ENCODE measurements at regions of chr5 and their contacts with region 1.

Region 1: GRCh38 chr5:167969998-167970397 is 321.4 kb upstream of the WWC1 start:
- DNase-seq: peak; percentile 66
- H3K4me3 ChIP-seq: peak overlapping the region; percentile 0
- H3K27ac ChIP-seq: peak overlapping the region; percentile 70
- H3K4me1 ChIP-seq: peaks cover 81% of the 10 kb centered on the region
- H3K27me3 ChIP-seq: no peaks in the 10 kb centered on the region
- CTCF ChIP-seq: peak; percentile 46; the same call in 1 of the 2 replicates

Region 2: GRCh38 chr5:168086104-168086610 is 116.2 kb after region 1 on chr5:
- CTCF ChIA-PET with region 1: no interaction called
- POLR2A ChIA-PET with region 1: no interaction called
- intact Hi-C with region 1: loop called (anchors 5 kb)
- DNase-seq: peak; percentile 95
- H3K4me3 ChIP-seq: no peak overlapping the region
- H3K27ac ChIP-seq: peak overlapping the region; percentile 96
- H3K4me1 ChIP-seq: peaks cover 52% of the 10 kb centered on the region
- H3K27me3 ChIP-seq: no peaks in the 10 kb centered on the region
- CTCF ChIP-seq: peak; percentile 44